Activated B cell treated with CpG ODN at 0.5 μM for 24 hours (primary cell): ENCODE measurements at regions of chr20 and their contacts with region 1.

Region 1: DNA sequence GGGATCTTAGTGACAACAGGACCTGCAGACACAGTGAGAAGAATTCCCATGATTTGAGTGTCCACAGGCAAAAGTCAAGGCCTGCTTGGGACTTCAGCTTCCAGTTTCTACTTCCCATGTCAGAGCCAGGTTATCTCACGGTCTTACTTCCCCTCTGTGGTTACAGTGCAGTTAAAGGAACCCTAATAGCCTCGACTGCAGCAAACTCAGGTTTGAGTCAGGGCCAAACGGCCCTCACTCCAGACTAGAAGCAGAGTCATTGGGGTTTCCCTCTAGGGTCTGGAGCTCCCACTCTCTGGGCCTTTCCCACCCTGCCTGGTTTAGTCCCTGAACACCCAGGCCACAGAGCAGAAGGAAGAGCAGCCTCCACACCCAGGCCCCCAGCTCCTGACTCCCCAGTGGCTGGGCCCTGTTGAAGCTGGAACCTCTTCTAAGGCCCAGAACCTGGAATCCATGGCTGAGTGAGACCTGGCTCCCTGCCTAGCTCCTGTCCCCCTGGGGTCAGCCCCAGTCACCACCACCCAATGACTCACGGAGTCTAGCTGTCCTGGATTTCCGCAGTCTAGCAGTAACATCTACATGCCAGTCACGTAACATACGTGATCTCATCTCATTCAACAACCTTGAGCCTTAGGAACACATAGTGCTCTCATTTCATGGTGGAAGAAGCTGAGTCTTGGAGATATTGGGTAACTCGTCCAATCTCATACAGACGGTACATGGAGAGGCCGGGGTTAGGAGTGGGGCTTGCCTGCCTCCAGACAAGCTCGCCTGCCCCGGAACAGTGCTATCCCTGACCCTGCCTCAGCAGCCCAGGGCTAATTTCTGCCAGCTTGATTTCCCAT is 9.2 kb upstream of the GHRH start:
- DNase-seq: peak; percentile 20
- ATAC-seq: peak; percentile 74
- H3K4me3 Mint-ChIP-seq: peak overlapping the region; percentile 11
- H3K27ac Mint-ChIP-seq: peak overlapping the region; percentile 72
- H3K4me1 Mint-ChIP-seq: peaks cover 52% of the 10 kb centered on the region
- H3K27me3 Mint-ChIP-seq: no peaks in the 10 kb centered on the region
- CTCF ChIP-seq: no peak

Region 2: DNA sequence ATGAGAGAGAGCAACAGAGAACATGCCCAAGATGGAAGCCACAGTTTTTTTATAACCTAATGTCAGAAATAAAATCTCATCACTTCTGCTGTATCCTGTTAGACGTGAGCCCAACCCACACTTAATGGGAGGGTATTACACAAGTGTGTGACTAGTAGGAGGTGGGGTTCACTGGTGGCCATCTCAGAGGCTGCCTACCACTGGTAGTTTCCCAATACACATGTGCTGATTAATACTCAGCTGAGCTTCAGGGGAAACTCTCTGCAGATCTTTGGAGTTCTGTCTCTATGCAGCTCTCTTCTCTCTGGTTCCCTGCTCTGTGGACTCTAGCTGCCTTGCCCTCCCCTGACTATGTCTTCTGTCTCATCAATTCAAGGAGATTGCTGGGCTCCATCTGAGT is 1266.8 kb before region 1 on chr20:
- CTCF ChIA-PET with region 1: no interaction called
- POLR2A ChIA-PET with region 1: no interaction called
- intact Hi-C with region 1: no loop called
- DNase-seq: no peak
- ATAC-seq: no peak
- H3K4me3 Mint-ChIP-seq: no peak overlapping the region
- H3K27ac Mint-ChIP-seq: no peak overlapping the region
- H3K4me1 Mint-ChIP-seq: no peaks in the 10 kb centered on the region
- H3K27me3 Mint-ChIP-seq: peaks cover 15% of the 10 kb centered on the region
- CTCF ChIP-seq: no peak

Region 3: GRCh38 chr20:37102571-37102970 is 168.2 kb before region 1 on chr20:
- CTCF ChIA-PET with region 1: no interaction called
- POLR2A ChIA-PET with region 1: no interaction called
- intact Hi-C with region 1: no loop called
- DNase-seq: no peak
- ATAC-seq: no peak
- H3K4me3 Mint-ChIP-seq: no peak overlapping the region
- H3K27ac Mint-ChIP-seq: no peak overlapping the region
- H3K4me1 Mint-ChIP-seq: no peaks in the 10 kb centered on the region
- H3K27me3 Mint-ChIP-seq: no peaks in the 10 kb centered on the region
- CTCF ChIP-seq: no peak

Region 4: GRCh38 chr20:37288091-37288490 is 17.3 kb after region 1 on chr20:
- CTCF ChIA-PET with region 1: interaction called, 9 read pairs
- POLR2A ChIA-PET with region 1: interaction called, 20 read pairs
- intact Hi-C with region 1: no loop called
- DNase-seq: no peak
- ATAC-seq: no peak
- H3K4me3 Mint-ChIP-seq: no peak overlapping the region
- H3K27ac Mint-ChIP-seq: no peak overlapping the region
- H3K4me1 Mint-ChIP-seq: peaks cover 35% of the 10 kb centered on the region
- H3K27me3 Mint-ChIP-seq: no peaks in the 10 kb centered on the region
- CTCF ChIP-seq: no peak

Region 5: DNA sequence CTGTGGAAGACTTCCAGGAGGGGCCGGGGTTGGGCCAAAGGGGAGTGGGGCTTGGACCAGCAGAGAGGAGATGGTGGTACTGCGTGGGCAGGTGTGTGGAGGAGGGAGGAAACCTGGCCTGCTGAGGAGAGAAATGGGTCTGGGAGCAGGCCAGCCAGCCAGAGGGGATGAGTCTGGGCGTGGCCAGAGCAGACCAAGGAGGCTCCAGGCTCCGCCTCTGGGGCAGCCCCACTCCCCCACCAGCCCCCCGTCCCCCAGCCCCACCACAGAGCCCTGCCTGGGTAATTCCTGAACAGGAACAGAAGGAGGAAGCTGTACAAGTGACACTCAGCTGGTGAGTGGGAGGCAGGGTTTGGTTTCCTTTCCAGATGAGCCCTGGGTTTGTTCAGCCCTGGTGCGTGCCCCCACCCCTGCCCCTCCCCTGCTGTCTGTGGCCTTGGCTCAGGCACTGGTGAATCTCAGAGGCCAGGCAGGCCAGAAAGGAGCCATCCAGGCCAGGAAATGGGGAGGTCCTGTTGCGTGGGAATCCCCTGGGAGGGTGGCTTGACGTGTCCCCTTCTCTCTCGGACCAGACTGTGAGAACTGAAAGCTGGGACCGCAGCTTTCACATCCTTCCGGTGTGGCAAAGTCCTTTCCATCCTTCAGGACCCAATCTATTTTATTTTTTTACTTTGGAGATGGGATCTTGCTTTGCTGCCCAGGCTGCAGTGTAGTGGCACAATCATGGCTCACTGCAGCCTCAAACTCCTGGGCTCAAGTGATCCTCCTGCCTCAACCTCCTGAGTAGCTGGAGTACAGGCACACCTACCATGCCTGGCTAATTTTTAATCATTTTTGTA is 65.8 kb after region 1 on chr20:
- CTCF ChIA-PET with region 1: no interaction called
- POLR2A ChIA-PET with region 1: interaction called, 7 read pairs
- intact Hi-C with region 1: loop called (anchors 2 kb)
- DNase-seq: peak; percentile 50
- ATAC-seq: peak; percentile 74
- H3K4me3 Mint-ChIP-seq: peak overlapping the region; percentile 65
- H3K27ac Mint-ChIP-seq: peak overlapping the region; percentile 92
- H3K4me1 Mint-ChIP-seq: peaks cover 52% of the 10 kb centered on the region
- H3K27me3 Mint-ChIP-seq: no peaks in the 10 kb centered on the region
- CTCF ChIP-seq: no peak

Region 6: DNA sequence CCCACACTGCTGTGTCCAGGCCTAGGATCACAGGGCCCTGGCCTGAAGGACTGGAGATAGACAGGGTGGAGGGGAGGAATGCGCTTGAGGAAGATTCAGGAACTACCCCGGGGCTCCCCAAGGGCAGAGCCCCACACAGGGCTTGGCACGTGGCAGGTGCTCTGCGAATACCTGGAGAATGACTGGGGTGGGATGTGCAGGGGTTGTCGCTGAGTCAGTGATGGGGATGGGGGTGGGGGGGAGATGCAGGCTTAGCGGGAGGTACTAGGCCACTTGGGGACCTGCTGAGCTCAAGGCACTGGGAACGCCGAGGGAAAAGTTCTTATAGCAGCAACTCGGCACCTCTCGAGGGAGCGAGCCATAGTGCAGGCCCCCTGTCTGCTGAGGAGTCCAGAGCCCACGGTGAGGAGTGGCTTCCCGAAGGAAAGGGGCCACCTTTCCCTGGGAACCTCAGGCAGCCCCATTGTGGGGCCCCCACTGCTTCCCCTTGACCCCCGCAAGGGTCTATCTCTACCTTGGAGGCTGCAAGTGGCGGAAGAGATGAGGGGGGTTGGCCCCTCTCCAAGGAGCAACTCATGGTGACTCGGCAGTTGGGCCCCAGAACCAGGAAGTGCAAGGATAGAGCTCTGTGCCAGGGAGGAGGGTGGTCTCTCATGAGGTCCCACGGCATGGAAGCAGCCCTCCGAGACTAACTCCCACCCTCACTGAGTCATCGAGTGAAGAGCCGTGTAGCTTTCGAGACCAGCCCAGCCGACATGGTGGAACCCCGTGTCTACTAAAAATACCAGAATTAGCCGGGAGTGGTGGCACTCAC is 108.2 kb after region 1 on chr20:
- CTCF ChIA-PET with region 1: interaction called, 59 read pairs
- POLR2A ChIA-PET with region 1: interaction called, 10 read pairs
- intact Hi-C with region 1: loop called (anchors 1 kb)
- DNase-seq: no peak
- ATAC-seq: no peak
- H3K4me3 Mint-ChIP-seq: no peak overlapping the region
- H3K27ac Mint-ChIP-seq: no peak overlapping the region
- H3K4me1 Mint-ChIP-seq: peaks cover 62% of the 10 kb centered on the region
- H3K27me3 Mint-ChIP-seq: no peaks in the 10 kb centered on the region
- CTCF ChIP-seq: no peak

Region 7: DNA sequence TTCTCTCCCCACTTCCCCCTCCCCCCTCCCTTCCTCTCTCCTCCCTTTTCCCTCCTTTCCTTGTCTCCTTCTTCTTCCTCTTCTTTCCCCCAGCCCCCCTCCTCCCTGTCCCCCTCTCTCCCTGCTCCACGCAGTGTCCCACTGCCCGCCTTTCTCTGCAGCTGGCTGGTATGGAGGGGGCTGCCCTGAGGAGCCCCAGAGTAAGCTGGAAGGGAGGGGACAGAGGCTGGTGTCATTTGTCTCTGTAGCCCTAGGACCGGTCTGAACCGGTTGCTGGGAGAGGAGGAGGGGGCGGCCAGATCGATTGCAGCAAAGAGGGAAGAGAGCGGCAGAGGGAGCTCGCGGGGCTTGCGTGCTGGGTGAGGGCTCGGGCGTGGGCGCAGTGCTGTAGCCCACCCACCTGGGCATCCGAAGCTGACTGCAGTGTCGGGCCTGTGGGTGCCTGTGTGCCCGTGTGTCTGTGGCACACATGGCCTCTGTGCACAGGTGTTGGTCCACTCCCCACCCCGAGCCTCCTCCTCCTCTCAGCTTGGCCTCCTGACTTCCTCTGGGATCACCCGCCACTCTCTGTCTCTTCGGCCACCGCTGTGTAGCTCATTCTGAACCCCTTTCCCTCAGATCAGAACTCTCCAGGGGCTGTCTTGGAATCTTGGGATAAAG is 125.7 kb after region 1 on chr20:
- CTCF ChIA-PET with region 1: no interaction called
- POLR2A ChIA-PET with region 1: no interaction called
- intact Hi-C with region 1: no loop called
- DNase-seq: no peak
- ATAC-seq: no peak
- H3K4me3 Mint-ChIP-seq: no peak overlapping the region
- H3K27ac Mint-ChIP-seq: no peak overlapping the region
- H3K4me1 Mint-ChIP-seq: no peaks in the 10 kb centered on the region
- H3K27me3 Mint-ChIP-seq: no peaks in the 10 kb centered on the region
- CTCF ChIP-seq: no peak